PC-3 (cell line): ENCODE measurements at regions of chr1 and their contacts with region 1.

Region 1: GRCh38 chr1:233113009-233113879 is 162.8 kb downstream of the NTPCR start:
- DNase-seq: peak; percentile 99
- ATAC-seq: peak; percentile 84
- H3K4me3 ChIP-seq: peak overlapping the region; percentile 55
- H3K27ac ChIP-seq: peak overlapping the region; percentile 97
- H3K4me1 ChIP-seq: peaks cover 48% of the 10 kb centered on the region
- H3K27me3 ChIP-seq: no peaks in the 10 kb centered on the region
- CTCF ChIP-seq: no peak

Region 2: GRCh38 chr1:233078396-233078795 is 34.8 kb before region 1 on chr1:
- CTCF ChIA-PET with region 1: interaction called, 6 read pairs
- POLR2A ChIA-PET with region 1: interaction called, 7 read pairs
- intact Hi-C with region 1: loop called (anchors 1 kb)
- DNase-seq: no peak
- ATAC-seq: no peak
- H3K4me3 ChIP-seq: no peak overlapping the region
- H3K27ac ChIP-seq: no peak overlapping the region
- H3K4me1 ChIP-seq: peaks cover 46% of the 10 kb centered on the region
- H3K27me3 ChIP-seq: no peaks in the 10 kb centered on the region
- CTCF ChIP-seq: no peak

Region 3: GRCh38 chr1:233085566-233085965 is 27.7 kb before region 1 on chr1:
- CTCF ChIA-PET with region 1: no interaction called
- POLR2A ChIA-PET with region 1: interaction called, 3 read pairs
- intact Hi-C with region 1: loop called (anchors 2 kb)
- DNase-seq: peak; percentile 96
- ATAC-seq: peak; percentile 91
- H3K4me3 ChIP-seq: peak overlapping the region; percentile 8; the same call in 1 of the 2 replicates
- H3K27ac ChIP-seq: peak overlapping the region; percentile 93
- H3K4me1 ChIP-seq: peaks cover 53% of the 10 kb centered on the region
- H3K27me3 ChIP-seq: no peaks in the 10 kb centered on the region
- CTCF ChIP-seq: no peak

Region 4: DNA sequence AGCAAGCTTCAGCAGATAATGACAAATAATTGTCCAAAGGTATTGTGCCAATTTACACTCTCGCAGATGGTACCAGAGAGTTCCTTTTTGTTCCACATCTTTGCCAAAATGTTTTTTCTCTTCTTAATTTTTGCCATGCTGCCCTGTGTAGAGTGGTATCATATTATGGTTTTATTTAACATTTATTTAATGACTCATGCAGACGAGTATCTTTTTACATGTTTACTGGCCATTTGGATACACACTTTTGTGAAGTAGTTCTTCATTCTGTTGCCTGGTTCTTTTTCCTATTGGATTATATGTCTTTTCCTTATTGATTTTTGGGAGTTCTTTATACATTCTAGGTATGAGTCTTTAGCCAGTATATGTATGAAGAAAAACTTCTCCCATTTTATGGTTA is 31.2 kb after region 1 on chr1:
- CTCF ChIA-PET with region 1: no interaction called
- POLR2A ChIA-PET with region 1: no interaction called
- intact Hi-C with region 1: loop called (anchors 2 kb)
- DNase-seq: peak; percentile 74
- ATAC-seq: peak; percentile 99
- H3K4me3 ChIP-seq: no peak overlapping the region
- H3K27ac ChIP-seq: peak overlapping the region; percentile 39
- H3K4me1 ChIP-seq: peaks cover 14% of the 10 kb centered on the region
- H3K27me3 ChIP-seq: no peaks in the 10 kb centered on the region
- CTCF ChIP-seq: no peak

Region 5: GRCh38 chr1:233172227-233172626 is 59.0 kb after region 1 on chr1:
- CTCF ChIA-PET with region 1: interaction called, 3 read pairs
- POLR2A ChIA-PET with region 1: no interaction called
- intact Hi-C with region 1: loop called (anchors 1 kb)
- DNase-seq: peak; percentile 89
- ATAC-seq: peak; percentile 75
- H3K4me3 ChIP-seq: no peak overlapping the region
- H3K27ac ChIP-seq: no peak overlapping the region
- H3K4me1 ChIP-seq: peaks cover 12% of the 10 kb centered on the region; the same call in 1 of the 2 replicates
- H3K27me3 ChIP-seq: no peaks in the 10 kb centered on the region
- CTCF ChIP-seq: peak; percentile 89

Region 6: DNA sequence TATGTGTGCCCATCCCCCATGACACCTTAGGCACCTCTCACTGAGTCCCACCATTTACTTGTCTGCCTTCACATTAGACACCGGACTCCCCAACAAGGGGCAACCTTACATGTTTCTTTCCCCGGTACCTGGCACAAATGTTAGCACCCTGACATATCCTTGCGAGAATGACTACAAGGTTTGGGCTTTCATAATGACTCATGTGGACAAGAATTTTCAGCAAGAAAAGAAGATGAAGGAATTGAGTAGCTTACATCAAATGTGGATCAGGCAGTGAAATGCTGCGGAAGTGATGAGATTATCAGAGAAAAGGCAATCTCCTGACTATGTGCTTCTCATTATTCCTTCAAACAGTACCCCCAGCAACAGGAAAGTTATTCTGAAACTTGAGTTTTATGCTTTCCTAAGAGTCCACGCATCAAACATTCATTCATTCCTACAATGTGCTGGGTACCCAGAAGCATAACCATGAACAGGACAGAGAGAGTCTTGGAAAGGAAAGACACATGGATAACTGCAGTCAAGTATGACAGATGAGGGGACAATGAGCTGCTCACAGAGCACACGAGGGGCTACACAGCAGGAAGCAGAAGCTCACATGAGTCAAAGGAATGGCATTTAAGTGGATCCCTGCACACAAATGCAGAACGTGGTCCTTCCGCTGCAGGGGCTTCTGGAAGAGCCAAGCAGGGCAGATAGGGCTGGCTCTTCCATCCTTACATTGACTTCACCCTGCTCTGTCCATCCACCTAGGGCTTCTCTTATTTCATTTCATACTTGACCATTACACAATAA is 70.2 kb after region 1 on chr1:
- CTCF ChIA-PET with region 1: no interaction called
- POLR2A ChIA-PET with region 1: no interaction called
- intact Hi-C with region 1: no loop called
- DNase-seq: peak; percentile 10
- ATAC-seq: no peak
- H3K4me3 ChIP-seq: no peak overlapping the region
- H3K27ac ChIP-seq: no peak overlapping the region
- H3K4me1 ChIP-seq: no peaks in the 10 kb centered on the region
- H3K27me3 ChIP-seq: no peaks in the 10 kb centered on the region
- CTCF ChIP-seq: no peak